OCI-LY7 (cell line): ENCODE measurements at regions of chr15 and their contacts with region 1.

Region 1: DNA sequence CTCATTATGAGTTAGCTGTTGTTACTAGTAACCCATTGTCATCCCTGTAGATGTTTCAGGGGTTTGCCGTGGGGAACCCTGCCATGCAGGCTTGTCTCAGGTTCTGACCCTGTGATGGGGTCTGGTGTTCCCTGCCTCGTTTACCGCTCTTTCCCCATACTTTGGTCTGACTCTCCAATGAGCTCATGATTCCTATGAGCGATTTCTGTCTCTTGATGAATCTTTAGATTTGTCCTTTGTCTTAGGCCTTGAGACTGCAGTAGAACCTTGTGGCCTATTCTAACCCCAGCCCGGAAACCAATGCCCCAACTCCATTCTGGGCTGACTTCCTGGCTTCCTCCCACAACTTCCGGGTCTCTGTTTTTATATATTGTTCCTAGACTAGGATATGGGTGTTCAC is 11.3 kb upstream of the IQGAP1 start:
- DNase-seq: peak; percentile 33
- H3K4me3 ChIP-seq: no peak overlapping the region
- H3K27ac ChIP-seq: no peak overlapping the region
- H3K4me1 ChIP-seq: peaks cover 10% of the 10 kb centered on the region
- CTCF ChIP-seq: no peak

Region 2: GRCh38 chr15:90362936-90363212 is 13.9 kb before region 1 on chr15:
- CTCF ChIA-PET with region 1: no interaction called
- POLR2A ChIA-PET with region 1: interaction called, 10 read pairs
- intact Hi-C with region 1: no loop called
- DNase-seq: no peak
- H3K4me3 ChIP-seq: no peak overlapping the region
- H3K27ac ChIP-seq: no peak overlapping the region
- H3K4me1 ChIP-seq: peaks cover 5% of the 10 kb centered on the region
- CTCF ChIP-seq: no peak